ENCODE measurements at regions of chr16 and their contacts with region 1.

Region 1: GRCh38 chr16:57600048-57600835 is 28.2 kb upstream of the ADGRG1 start:
- DNase-seq: peak; percentile 71
- CTCF ChIP-seq: peak; percentile 84

Region 2: DNA sequence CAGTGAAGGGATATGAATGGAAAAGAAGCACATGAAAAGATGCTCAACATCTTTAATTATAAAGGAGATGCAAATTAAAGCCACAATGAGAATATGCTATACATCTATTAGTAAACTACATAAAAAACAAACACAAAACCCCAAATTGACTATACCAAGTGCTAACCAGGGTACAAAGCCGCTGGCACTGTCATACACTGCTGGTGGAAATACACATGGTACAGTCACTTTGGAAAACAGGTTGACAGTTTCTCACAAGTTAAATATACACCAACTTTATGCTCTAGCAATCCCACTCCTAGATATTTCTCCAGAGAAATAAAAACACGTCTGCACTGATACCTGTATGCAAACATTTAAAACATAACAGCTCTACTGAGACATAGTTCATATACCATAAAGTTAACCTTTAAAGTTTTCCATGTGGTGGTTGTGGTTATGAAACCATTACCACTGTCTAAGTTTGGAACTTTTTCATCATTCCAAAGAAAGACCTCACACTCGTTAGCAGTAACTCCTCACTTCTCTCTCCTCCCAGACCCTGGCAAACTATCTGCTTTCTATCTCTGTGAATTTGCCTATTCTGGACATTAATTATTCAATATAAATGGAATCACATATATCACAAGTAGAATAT is 15.1 kb before region 1 on chr16:
- CTCF ChIA-PET with region 1: interaction called, 179 read pairs
- POLR2A ChIA-PET with region 1: interaction called, 4 read pairs
- DNase-seq: no peak
- CTCF ChIP-seq: no peak

Region 3: GRCh38 chr16:57618306-57619127 is 18.3 kb after region 1 on chr16:
- CTCF ChIA-PET with region 1: interaction called, 10 read pairs
- POLR2A ChIA-PET with region 1: no interaction called
- DNase-seq: no peak
- CTCF ChIP-seq: no peak

Region 4: GRCh38 chr16:57639172-57639887 is 39.1 kb after region 1 on chr16:
- CTCF ChIA-PET with region 1: interaction called, 11 read pairs
- POLR2A ChIA-PET with region 1: no interaction called
- DNase-seq: no peak
- CTCF ChIP-seq: no peak